Activated CD4-positive, alpha-beta T cell treated with anti-CD3 and anti-CD28 coated beads for 36 hours (primary cell): ENCODE measurements at regions of chr2 and their contacts with region 1.

Region 1: DNA sequence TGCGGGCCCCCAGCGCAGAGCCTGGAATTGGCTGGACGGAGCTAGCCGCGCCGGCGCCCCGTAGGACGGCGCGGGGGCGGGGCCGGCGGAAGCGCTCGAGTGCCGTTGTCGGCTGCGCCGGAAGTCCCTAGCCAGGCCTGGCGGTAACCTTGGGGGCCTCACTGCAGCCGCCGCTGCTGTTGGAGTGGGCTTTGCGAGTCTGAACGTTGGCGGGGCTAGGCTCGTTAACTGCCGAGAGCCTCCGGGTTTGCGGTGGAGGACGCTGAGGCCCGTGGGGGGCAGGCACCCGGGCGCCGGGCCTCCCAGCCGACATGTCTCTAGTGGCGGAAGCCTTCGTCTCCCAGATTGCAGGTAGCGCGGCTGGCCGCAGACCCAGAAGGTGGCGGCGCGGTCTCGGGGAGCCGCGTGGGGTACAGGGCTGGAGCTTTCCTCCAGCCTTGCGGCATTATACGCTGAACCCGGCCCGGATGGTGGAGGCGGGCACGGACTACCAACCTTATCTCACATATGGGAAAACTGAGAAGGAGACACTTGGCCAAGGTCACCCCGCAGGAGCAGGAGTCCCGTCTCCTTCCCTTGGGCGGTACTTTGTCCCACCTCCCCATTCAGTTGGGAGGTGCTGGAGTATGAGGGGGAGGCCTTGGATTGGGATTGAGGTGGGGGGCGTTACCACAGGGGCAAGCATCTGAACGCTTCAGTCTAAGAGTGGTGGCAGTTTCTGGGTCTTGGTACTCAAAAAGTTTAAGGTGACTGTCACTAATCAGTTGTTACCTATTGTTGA is at the start of gene MTX2:
- DNase-seq: peak; percentile 84
- ATAC-seq: peak; percentile 95
- H3K4me3 Mint-ChIP-seq: peak within 1 kb of the TSS; percentile 98
- H3K27ac Mint-ChIP-seq: peak within 1 kb of the TSS; percentile 94
- H3K4me1 Mint-ChIP-seq: peaks cover 29% of the 10 kb centered on the region
- H3K27me3 Mint-ChIP-seq: peaks cover 10% of the 10 kb centered on the region
- total RNA-seq, gene MTX2: 22.6 to 28.6 TPM

Region 2: DNA sequence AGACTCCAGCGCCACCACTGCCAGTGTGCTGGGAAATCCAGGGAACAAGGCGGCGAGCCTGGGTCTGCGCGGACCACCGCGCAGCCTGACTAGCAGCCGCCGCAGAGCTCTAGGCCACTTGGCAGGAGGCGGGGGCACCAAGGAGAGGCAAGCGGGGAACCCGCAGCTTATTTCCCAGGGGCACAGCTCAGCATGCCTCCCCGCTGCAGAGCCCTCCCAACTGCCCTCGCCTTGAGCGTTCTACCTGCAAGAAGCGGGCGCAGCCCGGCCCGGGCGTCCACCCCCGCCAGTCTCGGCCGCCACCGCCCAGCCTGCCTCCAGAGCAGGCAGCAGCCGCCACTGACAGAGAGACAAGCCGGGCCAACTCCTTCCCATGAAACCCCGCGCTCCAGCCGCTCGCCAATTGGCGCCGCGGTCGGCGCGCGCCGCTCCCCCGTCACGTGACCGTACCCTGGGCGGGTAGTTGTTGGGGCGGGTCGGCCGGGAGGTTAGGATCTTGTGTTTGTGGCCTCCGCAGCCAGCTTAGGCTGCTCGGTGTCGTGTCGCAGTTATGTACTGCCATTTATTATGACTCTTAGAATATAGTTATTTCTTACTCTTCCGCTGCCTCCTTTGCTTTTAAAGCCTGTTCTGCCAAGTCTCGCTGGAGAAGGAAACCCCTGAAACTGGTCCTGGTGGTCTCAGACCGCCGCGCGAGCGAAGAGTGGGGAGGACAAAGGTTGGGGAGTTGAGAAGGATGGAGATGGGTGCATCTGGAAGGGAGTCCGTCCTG is 267.4 kb before region 1 on chr2 and contains the start of gene LNPK:
- CTCF ChIA-PET with region 1: no interaction called
- POLR2A ChIA-PET with region 1: no interaction called
- intact Hi-C with region 1: loop called in 1 of 2 experiments (anchors 5 kb)
- DNase-seq: peak; percentile 95
- ATAC-seq: peak; percentile 93
- H3K4me3 Mint-ChIP-seq: peak within 1 kb of the TSS; percentile 99
- H3K27ac Mint-ChIP-seq: peak within 1 kb of the TSS; percentile 95
- H3K4me1 Mint-ChIP-seq: peaks cover 19% of the 10 kb centered on the region
- H3K27me3 Mint-ChIP-seq: no peaks in the 10 kb centered on the region
- total RNA-seq, gene LNPK: 27.3 to 36.0 TPM